MCF 10A (cell line): ENCODE measurements at regions of chr4 and their contacts with region 1.

Region 1: DNA sequence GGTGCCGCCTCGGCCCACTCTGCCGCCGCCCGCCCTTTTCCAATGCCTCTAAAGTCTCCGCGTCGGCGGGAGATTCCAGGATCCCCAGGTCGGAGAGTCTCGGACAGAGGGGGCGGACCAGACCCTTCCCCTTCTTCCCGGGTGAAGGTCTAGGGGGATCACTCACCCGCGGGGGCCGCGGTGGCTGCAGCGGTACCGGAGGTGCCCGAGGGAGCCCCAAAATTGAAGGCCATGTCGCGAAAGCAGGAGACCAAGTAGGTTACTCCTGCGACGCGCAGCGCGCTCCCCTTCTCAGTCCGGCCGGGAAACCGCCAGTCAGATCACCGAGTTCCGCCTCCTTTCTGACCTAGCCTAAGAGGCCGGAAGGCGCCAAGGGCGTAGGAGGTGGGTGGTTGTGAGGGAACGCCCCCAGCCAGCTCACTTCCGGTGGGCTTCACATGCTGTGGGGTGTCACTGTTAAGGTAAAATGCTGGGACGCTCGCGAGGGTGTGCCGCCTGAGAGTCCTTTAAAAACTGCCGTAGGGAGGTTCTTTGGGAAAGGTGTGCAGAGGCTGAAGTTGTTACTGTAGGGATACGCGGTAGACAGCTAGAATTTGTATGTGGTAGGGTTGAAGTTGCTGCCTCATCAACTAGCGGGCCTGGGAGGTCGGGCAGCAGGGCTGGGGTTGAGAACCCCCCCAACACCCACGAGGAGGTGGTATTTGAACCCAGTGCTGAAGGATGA is at the start of gene NUP54:
- DNase-seq: peak; percentile 94
- H3K4me3 Mint-ChIP-seq: peak within 1 kb of the TSS; percentile 98
- H3K27ac Mint-ChIP-seq: peak within 1 kb of the TSS; percentile 98
- H3K4me1 Mint-ChIP-seq: peaks cover 12% of the 10 kb centered on the region
- H3K27me3 Mint-ChIP-seq: no peaks in the 10 kb centered on the region
- CTCF ChIP-seq: no peak
- total RNA-seq, gene NUP54: 46.9 and 51.5 TPM in 2 replicates

Region 2: DNA sequence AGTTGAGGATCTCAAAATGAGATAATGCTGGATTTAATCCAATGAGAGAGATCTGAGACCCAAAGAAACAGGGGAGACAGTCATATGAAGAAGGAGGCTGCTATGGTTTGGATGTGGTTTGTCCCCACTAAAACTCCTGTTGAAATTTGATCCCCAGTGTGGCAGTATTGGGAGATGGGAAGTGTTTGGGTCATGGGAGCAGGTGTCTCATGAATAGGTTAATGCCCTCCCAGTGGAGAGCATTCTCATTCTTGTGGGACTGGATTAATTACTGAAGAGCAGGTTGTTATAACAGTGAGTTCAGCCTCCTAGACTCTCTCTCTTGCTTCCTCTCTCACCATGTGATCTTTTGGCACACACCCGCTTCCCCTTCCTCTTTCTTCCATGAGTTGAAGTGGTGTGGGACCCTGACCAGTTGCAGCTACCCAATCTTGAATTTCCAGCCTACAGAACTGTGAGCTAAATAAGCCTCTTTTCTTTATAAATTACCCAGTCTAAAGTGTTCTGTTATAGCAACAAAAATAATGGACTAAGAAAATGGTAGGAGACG is 316.4 kb before region 1 on chr4:
- CTCF ChIA-PET with region 1: no interaction called
- POLR2A ChIA-PET with region 1: no interaction called
- intact Hi-C with region 1: no loop called
- DNase-seq: no peak
- H3K4me3 Mint-ChIP-seq: no peak overlapping the region
- H3K27ac Mint-ChIP-seq: no peak overlapping the region
- H3K4me1 Mint-ChIP-seq: no peaks in the 10 kb centered on the region
- H3K27me3 Mint-ChIP-seq: no peaks in the 10 kb centered on the region
- CTCF ChIP-seq: no peak

Region 3: DNA sequence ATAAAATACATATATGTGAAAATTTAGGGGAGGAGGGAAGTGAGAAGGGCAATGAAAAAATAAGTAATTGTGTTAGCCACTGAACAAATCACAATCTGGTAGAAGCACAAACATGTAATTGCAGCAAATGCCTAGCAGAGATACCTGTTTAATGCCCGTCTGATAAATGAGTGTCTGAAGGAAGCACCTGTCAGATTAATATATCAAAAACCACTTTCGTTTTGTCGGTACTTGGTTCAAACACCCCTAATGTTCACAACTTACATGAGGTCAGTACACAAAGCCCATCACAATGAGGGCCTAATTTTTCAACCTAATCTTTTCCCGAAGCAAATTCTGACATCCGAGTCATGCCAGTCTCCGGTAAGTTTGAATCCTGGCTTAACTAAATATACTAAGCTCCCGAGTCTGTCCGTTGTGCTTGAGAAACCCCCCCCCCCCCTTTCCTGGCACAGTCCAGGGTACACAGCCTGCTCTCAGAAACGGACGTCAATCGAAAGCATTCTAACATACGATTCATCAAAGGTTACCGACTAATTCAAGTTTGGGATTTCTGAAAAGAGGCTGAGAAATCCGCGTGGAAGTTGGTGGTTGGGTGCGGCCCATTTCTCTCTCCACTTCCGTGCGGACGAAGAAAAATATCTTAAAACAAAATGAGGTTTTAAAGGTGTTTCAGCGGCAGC is 158.3 kb before region 1 on chr4:
- CTCF ChIA-PET with region 1: interaction called, 4 read pairs
- POLR2A ChIA-PET with region 1: interaction called, 14 read pairs
- intact Hi-C with region 1: loop called (anchors 5 kb)
- DNase-seq: peak; percentile 4
- H3K4me3 Mint-ChIP-seq: peak overlapping the region; percentile 83
- H3K27ac Mint-ChIP-seq: peak overlapping the region; percentile 68
- H3K4me1 Mint-ChIP-seq: peaks cover 20% of the 10 kb centered on the region
- H3K27me3 Mint-ChIP-seq: peaks cover 7% of the 10 kb centered on the region
- CTCF ChIP-seq: no peak

Region 4: GRCh38 chr4:77203380-77204197 is 1055.3 kb after region 1 on chr4:
- CTCF ChIA-PET with region 1: no interaction called
- POLR2A ChIA-PET with region 1: no interaction called
- intact Hi-C with region 1: no loop called
- DNase-seq: peak; percentile 85
- H3K4me3 Mint-ChIP-seq: no peak overlapping the region
- H3K27ac Mint-ChIP-seq: no peak overlapping the region
- H3K4me1 Mint-ChIP-seq: peaks cover 25% of the 10 kb centered on the region
- H3K27me3 Mint-ChIP-seq: no peaks in the 10 kb centered on the region
- CTCF ChIP-seq: peak; percentile 87